Common myeloid progenitor, CD34-positive (primary cell): ENCODE measurements at regions of chr1 and their contacts with region 1.

Region 1: GRCh38 chr1:66253330-66253921 is 280.5 kb upstream of the SGIP1 start:
- DNase-seq: peak; percentile 65 to 73 (median 69)
- H3K4me3 ChIP-seq: no peak overlapping the region
- H3K27ac ChIP-seq: no peak overlapping the region
- H3K4me1 ChIP-seq: peaks cover 0 to 26% (median 14%) of the 10 kb centered on the region in 4 experiments
- H3K27me3 ChIP-seq: no peaks in the 10 kb centered on the region

Region 2: DNA sequence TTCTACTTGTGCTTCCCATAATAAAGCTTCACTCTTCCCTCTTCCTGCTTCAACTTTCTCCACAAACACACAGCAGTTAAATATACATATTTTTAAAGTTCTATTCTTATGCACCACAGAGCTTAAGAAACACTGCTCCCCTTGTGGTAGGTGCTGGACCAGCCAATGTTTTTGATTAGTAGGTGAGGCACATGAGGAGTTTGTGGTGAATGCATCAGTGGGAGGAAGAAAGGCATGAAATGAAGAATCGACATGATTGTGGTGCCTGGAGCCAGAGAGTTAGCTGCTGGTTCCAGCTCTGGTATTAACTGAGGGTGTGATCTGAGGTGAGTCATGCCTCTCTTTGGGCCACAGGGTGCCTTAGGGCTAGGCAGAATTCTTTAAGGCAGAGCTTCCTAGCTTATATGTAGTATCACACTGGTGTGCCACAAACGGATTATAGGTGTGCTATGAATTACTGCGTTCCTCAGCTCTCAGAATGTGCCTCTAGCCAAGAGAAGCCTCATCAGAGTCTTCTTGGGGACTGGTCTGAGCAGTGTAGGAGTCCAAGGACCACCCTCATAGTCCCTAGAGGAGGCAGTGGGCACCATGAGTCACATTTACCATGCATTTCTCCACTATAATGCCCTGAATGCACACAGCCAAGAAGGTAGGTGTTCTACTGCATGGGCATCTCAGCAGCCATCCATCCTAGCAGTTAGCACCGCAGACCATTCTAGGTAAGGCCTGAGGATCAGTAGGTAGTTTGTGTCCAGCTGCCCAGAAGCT is 183.1 kb after region 1 on chr1:
- CTCF ChIA-PET with region 1: interaction called, 374 read pairs
- POLR2A ChIA-PET with region 1: no interaction called
- DNase-seq: peak; percentile 31 to 73 (median 58)
- H3K4me3 ChIP-seq: no peak overlapping the region
- H3K27ac ChIP-seq: no peak overlapping the region
- H3K4me1 ChIP-seq: peaks cover 14 to 45% (median 32%) of the 10 kb centered on the region in 4 experiments
- H3K27me3 ChIP-seq: no peaks in the 10 kb centered on the region

Region 3: GRCh38 chr1:66503841-66504470 is 250.5 kb after region 1 on chr1:
- CTCF ChIA-PET with region 1: interaction called, 12 read pairs
- POLR2A ChIA-PET with region 1: no interaction called
- DNase-seq: peak; percentile 49 to 77 (median 69)
- H3K4me3 ChIP-seq: no peak overlapping the region
- H3K27ac ChIP-seq: no peak overlapping the region
- H3K4me1 ChIP-seq: no peaks in the 10 kb centered on the region
- H3K27me3 ChIP-seq: no peaks in the 10 kb centered on the region